Psoas muscle (tissue), 8 donors: ENCODE measurements at regions of chr15 and their contacts with region 1.

Region 1: GRCh38 chr15:101501703-101502373 is 12.3 kb upstream of the PCSK6 start:
- DNase-seq: peak; percentile 43 to 67
- ATAC-seq: peak in 3 of 4 donors; percentile 29 to 47 (median 45)
- H3K4me3 ChIP-seq: no peak overlapping the region
- H3K27ac ChIP-seq: peak overlapping the region; percentile 85
- H3K4me1 ChIP-seq: peaks cover 35% of the 10 kb centered on the region
- H3K27me3 ChIP-seq: peaks cover 0 to 4% (median 0%) of the 10 kb centered on the region in 3 donors
- CTCF ChIP-seq: peak; percentile 29

Region 2: DNA sequence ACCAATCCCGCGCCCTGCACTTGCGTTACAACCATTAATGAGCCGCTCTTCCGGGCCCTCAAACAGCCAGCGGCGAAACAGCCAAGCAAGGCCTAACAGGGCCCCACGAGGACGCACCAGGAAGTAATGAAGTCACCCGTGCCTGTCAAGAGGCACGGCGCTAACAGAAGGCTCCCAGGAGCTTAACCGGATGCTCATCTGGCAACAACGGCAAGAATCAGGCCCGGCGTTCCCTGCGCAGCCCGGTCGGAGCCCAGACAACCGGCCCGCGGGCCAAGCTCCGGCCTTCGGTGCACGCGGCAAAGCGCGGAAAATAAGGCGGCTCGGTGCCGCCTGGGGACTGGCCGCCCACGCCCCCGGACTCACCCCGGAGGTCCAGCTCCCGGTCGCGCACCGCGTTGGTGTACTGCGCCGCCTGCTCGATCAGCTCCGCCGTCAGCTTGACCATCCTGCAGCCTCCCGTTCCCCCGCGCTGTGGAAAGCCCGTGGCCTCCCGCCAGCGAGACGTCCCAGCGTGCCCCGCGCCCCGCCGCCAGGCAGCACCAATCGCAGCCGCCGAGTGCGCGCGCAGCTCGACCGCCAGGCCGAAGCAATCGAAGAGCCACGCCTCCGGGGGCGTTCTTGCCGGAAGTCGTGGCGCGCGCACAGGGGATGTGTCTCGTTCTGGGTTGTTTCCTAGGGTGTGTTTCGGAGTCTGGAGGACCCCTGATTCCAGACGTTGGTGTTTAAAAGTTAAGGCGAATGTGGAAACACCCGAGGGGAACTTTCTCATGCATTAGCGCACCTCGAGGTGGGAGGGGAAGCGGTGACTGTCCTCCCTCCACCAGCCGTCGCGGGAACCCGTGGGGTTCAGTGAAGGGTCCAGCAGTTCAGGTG is 206.9 kb before region 1 on chr15 and contains the start of gene SNRPA1:
- intact Hi-C with region 1: loop called (anchors 5 kb)
- DNase-seq: peak; percentile 99 to 100
- ATAC-seq: peak; percentile 94 to 95 (median 95)
- H3K4me3 ChIP-seq: peak within 1 kb of the TSS; percentile 99
- H3K27ac ChIP-seq: peak within 1 kb of the TSS; percentile 98
- H3K4me1 ChIP-seq: peaks cover 35% of the 10 kb centered on the region
- H3K27me3 ChIP-seq: no peaks in the 10 kb centered on the region
- CTCF ChIP-seq: no peak
- total RNA-seq, gene SNRPA1: 14.8 to 42.3 (median 28.0) TPM

Region 3: DNA sequence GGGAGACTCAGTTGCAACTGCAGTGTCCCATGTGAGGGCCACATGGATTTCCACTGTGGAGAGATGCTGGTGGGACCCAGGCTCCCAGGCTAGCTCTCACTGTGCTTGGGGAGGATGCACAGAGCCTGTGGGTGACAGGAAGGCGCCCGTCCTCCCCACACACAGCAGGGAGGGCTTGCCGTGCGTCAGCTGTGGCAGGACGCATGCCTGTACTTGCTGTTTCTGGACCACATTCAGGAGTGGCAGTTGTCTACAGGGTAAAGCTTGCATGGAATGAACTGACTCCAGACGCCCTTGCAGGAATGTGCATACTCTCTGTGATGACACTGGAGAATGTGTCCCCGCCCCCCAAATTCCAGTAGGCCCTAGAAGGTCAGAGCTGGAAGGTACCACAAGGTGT is 142.9 kb before region 1 on chr15:
- intact Hi-C with region 1: no loop called
- DNase-seq: no peak
- ATAC-seq: peak; percentile 73 to 90 (median 80)
- H3K4me3 ChIP-seq: no peak overlapping the region
- H3K27ac ChIP-seq: peak overlapping the region; percentile 63
- H3K4me1 ChIP-seq: peaks cover 17% of the 10 kb centered on the region
- H3K27me3 ChIP-seq: no peaks in the 10 kb centered on the region
- CTCF ChIP-seq: no peak

Region 4: GRCh38 chr15:101372149-101372577 is 129.7 kb before region 1 on chr15:
- intact Hi-C with region 1: loop called in 1 of 2 experiments (anchors 10 kb)
- DNase-seq: peak in 1 of 2 donors; percentile 49
- ATAC-seq: no peak
- H3K4me3 ChIP-seq: no peak overlapping the region
- H3K27ac ChIP-seq: no peak overlapping the region
- H3K4me1 ChIP-seq: no peaks in the 10 kb centered on the region
- H3K27me3 ChIP-seq: no peaks in the 10 kb centered on the region
- CTCF ChIP-seq: no peak

Region 5: GRCh38 chr15:101407439-101407838 is 94.4 kb before region 1 on chr15:
- intact Hi-C with region 1: no loop called
- DNase-seq: no peak
- ATAC-seq: no peak
- H3K4me3 ChIP-seq: no peak overlapping the region
- H3K27ac ChIP-seq: no peak overlapping the region
- H3K4me1 ChIP-seq: no peaks in the 10 kb centered on the region
- H3K27me3 ChIP-seq: no peaks in the 10 kb centered on the region
- CTCF ChIP-seq: no peak

Region 6: GRCh38 chr15:101472033-101472432 is 29.8 kb before region 1 on chr15:
- intact Hi-C with region 1: loop called in 1 of 2 experiments (anchors 1 kb)
- DNase-seq: no peak
- ATAC-seq: no peak
- H3K4me3 ChIP-seq: no peak overlapping the region
- H3K27ac ChIP-seq: no peak overlapping the region
- H3K4me1 ChIP-seq: peaks cover 12% of the 10 kb centered on the region
- H3K27me3 ChIP-seq: no peaks in the 10 kb centered on the region
- CTCF ChIP-seq: no peak

Region 7: DNA sequence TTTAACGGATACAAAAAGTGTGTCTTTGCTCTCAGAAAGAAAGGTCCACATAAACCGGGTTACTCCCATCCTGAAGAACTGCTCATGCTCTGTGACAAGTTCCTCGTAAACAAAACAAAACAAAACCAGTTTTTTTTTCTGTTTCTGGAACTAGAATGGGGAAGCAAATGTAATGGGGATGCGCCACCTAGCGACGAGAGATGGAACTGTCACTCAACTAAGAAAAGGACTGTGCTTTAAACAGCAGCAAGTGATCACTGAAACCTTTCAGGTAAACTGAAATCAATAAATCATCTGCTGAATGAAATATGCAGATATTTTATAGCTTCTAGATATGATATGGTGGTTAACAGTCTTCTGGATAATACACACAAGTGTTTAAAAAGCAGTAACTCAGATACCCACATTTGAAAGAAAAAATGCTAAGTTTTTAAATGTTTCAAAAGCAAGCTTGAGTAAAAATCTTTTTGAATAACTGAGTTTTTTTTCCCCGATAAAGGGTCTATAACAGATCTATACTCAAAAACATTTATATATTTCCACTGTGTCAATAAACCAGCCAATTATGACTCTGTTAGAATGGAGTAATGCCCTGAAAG is 139.4 kb after region 1 on chr15:
- intact Hi-C with region 1: loop called in 1 of 2 experiments (anchors 5 kb)
- DNase-seq: peak; percentile 65 to 76
- ATAC-seq: peak; percentile 31 to 79 (median 64)
- H3K4me3 ChIP-seq: peak overlapping the region; percentile 22
- H3K27ac ChIP-seq: peak overlapping the region; percentile 71
- H3K4me1 ChIP-seq: peaks cover 26% of the 10 kb centered on the region
- H3K27me3 ChIP-seq: no peaks in the 10 kb centered on the region
- CTCF ChIP-seq: peak; percentile 97